ENCODE measurements at regions of chr3 and their contacts with region 1.

Region 1: DNA sequence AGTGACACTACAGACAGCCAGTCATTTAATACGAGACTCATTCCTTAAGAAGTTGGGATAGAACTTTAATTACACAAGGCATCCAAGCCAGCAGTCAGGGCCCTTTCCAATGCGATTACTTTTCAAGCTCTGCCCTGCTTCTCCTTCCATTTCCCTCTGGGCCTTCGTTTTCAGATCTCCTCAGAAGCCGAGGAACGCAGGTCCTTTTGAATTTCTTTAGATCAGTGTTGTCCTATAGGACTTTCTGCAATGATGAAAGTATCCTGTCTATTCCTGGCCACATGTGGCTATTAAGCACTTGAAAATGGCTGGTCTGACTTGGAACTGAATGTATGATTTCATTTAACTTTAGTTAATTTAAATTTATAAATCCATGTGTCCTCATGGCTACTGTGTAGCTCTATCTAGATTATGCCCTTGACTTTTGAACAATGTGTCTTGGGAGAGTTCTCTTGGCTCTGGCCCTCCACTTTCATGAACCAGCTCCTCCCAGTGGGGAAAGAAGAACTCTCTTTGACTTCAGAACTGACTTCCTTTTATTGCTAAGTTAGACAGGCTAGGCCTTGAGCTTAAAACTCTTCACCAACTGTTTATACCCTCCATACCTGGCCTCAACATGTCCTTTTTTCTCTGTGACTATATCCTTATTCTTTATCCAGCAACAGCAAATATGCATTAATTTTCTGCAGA is 22.6 kb downstream of the TGFBR2 start:
- DNase-seq: no peak
- H3K4me3 Mint-ChIP-seq: peak overlapping the region; percentile 19
- H3K27ac Mint-ChIP-seq: peak overlapping the region; percentile 97
- H3K4me1 Mint-ChIP-seq: peaks cover 89% of the 10 kb centered on the region
- H3K27me3 Mint-ChIP-seq: no peaks in the 10 kb centered on the region

Region 2: DNA sequence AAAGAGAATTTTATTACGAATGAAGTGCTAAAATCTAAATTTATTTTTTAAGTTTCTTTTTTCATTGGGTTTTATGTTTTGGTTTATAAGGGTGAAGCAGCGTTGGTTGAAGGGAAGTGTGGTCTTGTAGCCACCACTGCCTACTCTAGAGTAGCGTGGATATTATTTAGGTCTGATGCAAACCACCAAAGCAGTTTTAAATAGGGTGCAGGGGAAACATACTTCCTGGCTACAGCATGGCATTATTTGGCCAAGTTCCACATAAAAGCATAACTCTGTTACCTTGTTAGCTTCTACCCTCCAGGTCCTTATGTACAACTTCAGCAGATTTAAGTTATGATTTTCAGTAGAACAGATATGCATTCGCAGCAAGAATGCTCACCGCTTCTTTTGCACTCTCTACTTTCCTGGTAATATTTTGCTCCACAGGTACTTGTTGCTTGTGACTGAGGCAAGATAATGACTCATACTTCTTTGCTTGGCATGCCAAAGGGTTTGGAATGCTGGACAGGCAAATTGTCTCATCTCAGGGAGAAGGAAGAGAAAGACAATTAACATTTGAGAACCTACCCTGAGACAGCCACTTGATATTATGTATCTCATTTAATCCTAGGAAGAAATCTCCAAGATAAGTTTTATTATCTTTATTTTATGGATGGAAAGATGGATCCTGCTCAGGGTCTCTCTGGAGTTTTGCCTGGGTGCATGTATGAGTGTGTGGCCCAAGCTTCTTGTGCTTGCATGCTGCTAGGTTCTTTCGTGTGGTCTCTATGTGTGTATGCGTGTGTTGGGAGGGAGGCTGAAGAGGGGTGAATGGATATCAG is 17.2 kb before region 1 on chr3:
- CTCF ChIA-PET with region 1: interaction called, 18 read pairs
- POLR2A ChIA-PET with region 1: interaction called, 671 read pairs
- DNase-seq: no peak
- H3K4me3 Mint-ChIP-seq: peak overlapping the region; percentile 93
- H3K27ac Mint-ChIP-seq: peak overlapping the region; percentile 88
- H3K4me1 Mint-ChIP-seq: peaks cover 72% of the 10 kb centered on the region
- H3K27me3 Mint-ChIP-seq: no peaks in the 10 kb centered on the region

Region 3: DNA sequence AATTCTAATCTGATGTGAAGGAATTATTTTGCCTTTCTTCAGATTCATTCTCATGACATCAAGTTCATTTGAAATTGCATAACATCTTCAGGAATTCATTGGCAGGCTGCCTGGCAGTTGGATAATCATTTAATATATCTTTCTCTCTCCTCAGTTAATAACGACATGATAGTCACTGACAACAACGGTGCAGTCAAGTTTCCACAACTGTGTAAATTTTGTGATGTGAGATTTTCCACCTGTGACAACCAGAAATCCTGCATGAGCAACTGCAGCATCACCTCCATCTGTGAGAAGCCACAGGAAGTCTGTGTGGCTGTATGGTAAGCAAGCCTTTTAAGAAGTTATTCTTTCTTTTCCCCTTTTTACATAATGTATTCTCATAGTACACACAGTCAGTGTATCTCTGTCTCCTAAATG is 15.6 kb after region 1 on chr3:
- CTCF ChIA-PET with region 1: interaction called, 9 read pairs
- POLR2A ChIA-PET with region 1: interaction called, 671 read pairs
- DNase-seq: peak; percentile 66
- H3K4me3 Mint-ChIP-seq: peak overlapping the region; percentile 57
- H3K27ac Mint-ChIP-seq: peak overlapping the region; percentile 99
- H3K4me1 Mint-ChIP-seq: peaks cover 96% of the 10 kb centered on the region
- H3K27me3 Mint-ChIP-seq: no peaks in the 10 kb centered on the region

Measured in activated CD4-positive, alpha-beta memory T cell treated with anti-CD3 and anti-CD28 coated beads, Interleukin-2, amount 10 ng/mL, durations not matched to agents 7 days and 5 days (primary cell).